ENCODE measurements at regions of chr5 and their contacts with region 1.

Region 1: DNA sequence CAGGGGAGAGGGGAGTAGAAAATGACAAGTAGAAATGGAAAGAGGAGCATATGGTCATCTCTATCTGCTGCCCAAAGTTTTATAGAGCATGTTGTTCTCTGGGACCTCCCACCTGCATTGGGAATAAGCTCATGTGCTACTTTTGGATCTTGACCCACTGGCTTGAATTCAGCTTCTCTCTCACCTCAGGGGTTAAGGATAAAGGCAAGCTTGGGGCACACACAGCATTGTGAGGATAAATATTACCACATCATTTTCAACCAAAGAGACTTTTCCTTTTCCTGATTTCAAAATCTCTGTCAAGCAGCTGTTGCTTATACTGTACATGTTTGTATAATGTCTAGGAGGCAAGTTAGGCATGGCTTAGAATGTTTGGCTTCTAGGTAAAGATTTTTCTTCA is 16.6 kb downstream of the ATP10B start:
- DNase-seq: no peak
- H3K4me3 ChIP-seq: no peak overlapping the region
- H3K27ac ChIP-seq: no peak overlapping the region
- H3K4me1 ChIP-seq: peaks cover 31% of the 10 kb centered on the region
- H3K27me3 ChIP-seq: no peaks in the 10 kb centered on the region
- CTCF ChIP-seq: no peak

Region 2: DNA sequence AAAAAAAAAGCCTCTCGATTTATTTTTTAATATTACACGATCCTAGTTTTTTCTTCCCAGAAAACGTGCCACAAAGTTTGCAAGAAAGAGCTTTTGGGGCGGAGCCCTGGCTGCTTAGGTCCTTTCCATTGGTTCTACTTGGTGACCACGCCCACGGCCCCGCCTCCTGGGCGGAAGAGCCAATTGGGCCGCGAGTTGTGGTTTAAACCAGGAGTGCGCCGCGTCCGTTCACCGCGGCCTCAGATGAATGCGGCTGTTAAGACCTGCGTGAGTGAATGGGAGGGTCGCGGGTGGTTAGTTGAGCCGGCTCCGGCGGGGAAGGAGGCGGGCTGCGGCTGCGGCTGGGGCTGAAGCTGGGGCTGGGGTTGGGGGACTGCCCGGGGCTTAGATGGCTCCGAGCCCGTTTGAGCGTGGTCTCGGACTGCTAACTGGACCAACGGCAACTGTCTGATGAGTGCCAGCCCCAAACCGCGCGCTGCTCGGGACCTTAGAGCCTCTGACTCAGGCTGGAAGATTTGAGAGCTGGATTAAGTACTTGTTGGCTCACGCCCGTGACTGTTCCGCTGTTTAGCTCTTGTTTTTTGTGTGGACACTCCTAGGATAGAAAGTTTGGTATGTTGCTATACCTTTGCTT is 413.6 kb before region 1 on chr5 and contains the start of gene PTTG1:
- CTCF ChIA-PET with region 1: no interaction called
- dilution Hi-C with region 1: no loop called
- in situ Hi-C with region 1: no loop called
- intact Hi-C with region 1: loop called (anchors 5 kb)
- DNase-seq: peak; percentile 96
- H3K4me3 ChIP-seq: peak within 1 kb of the TSS; percentile 76 to 88 (median 81)
- H3K27ac ChIP-seq: peak within 1 kb of the TSS; percentile 89
- H3K4me1 ChIP-seq: peaks cover 37% of the 10 kb centered on the region
- H3K27me3 ChIP-seq: no peaks in the 10 kb centered on the region
- CTCF ChIP-seq: no peak
- total RNA-seq, gene PTTG1: 28.5 to 106 TPM

Region 3: DNA sequence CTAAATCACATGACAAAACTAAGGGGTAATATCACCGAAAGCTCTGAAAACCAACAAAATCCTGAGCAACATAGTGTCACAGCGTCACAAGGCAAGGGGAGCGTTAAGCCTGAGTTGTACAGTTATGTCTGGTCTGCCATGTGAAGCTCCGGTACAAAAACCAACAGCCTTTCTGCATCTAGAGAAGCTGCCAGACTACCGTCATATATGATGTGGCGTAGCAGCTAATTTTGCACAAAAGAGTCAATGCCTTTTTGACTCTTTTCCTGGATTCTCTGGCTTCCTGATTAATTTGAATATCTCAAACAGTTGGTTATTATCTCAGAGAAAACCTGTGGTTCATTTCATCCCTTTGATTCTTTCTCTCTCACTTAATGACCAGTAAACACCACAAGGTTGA is 32.6 kb after region 1 on chr5:
- CTCF ChIA-PET with region 1: no interaction called
- dilution Hi-C with region 1: no loop called
- in situ Hi-C with region 1: no loop called
- intact Hi-C with region 1: no loop called
- DNase-seq: no peak
- H3K4me3 ChIP-seq: no peak overlapping the region
- H3K27ac ChIP-seq: no peak overlapping the region
- H3K4me1 ChIP-seq: no peaks in the 10 kb centered on the region
- H3K27me3 ChIP-seq: no peaks in the 10 kb centered on the region
- CTCF ChIP-seq: no peak

Region 4: GRCh38 chr5:160959804-160960203 is 124.4 kb after region 1 on chr5:
- CTCF ChIA-PET with region 1: no interaction called
- dilution Hi-C with region 1: no loop called
- in situ Hi-C with region 1: loop called in 1 of 2 experiments (anchors 10 kb)
- intact Hi-C with region 1: loop called (anchors 10 kb)
- DNase-seq: peak; percentile 97
- H3K4me3 ChIP-seq: no peak overlapping the region
- H3K27ac ChIP-seq: peak overlapping the region; percentile 72
- H3K4me1 ChIP-seq: peaks cover 24% of the 10 kb centered on the region
- H3K27me3 ChIP-seq: no peaks in the 10 kb centered on the region
- CTCF ChIP-seq: no peak